Brain microvascular endothelial cell (primary cell): ENCODE measurements at regions of chr17 and their contacts with region 1.

Region 1: DNA sequence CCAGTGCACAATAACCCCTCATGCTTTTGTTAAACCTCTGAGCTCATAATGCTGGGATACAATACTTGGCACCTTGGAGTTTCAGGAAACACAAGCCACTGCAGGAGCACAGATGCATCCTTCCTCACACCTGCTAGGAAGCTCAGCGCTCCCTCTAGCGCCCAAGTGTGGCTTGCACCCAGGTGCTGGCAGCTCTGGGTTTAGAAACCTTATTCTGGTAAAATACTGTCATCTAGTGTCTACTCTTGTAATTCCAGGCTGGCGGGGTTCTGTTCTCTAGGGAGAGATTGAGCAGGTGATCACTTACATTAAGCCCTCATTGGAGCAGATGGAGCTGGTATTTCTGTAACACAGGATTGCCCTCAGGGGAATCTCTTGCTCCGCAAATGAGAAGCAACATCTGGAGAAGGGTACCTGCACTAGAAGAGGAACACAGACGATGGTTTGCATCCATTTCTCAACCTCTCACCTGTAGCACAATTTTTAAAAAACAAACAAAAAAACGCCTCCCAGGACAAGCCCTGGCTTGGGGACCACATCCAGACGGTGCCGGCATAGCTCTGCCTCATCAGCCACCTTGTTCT is 1.5 kb downstream of the CCL1 start:
- DNase-seq: peak; percentile 69
- H3K4me3 ChIP-seq: no peak overlapping the region
- H3K27ac ChIP-seq: no peak overlapping the region
- H3K27me3 ChIP-seq: no peaks in the 10 kb centered on the region
- CTCF ChIP-seq: peak; percentile 94

Region 2: DNA sequence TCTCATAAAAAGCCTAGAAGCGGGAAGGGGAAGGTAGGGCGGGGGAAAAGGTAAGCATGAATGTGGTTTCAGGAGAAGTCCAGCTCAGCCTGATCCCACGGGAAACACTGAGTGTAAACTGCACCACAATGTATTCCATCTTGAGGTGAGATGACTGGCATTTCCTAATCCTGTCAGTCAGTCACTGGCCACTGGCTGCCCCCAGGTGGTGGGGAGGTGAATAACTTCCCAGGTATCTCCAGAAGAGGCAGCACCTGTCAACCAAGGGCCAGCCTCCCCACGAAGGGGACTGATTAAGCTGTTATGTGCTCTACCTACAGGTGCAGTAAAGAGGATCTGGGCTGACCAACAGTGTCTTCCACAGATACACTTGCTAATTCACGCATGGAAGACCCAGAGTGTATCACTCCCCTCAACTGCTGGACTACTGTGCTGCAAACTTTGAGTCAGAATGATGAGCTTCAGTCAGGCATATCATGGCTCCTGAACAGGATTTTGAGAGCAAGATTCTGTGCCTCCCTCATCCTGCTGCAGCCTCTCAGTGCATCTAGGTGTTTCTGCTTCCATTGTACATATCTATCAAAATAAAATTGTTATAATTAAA is 215.0 kb before region 1 on chr17:
- in situ Hi-C with region 1: no loop called
- DNase-seq: no peak
- H3K4me3 ChIP-seq: no peak overlapping the region
- H3K27ac ChIP-seq: no peak overlapping the region
- H3K27me3 ChIP-seq: no peaks in the 10 kb centered on the region
- CTCF ChIP-seq: no peak

Region 3: DNA sequence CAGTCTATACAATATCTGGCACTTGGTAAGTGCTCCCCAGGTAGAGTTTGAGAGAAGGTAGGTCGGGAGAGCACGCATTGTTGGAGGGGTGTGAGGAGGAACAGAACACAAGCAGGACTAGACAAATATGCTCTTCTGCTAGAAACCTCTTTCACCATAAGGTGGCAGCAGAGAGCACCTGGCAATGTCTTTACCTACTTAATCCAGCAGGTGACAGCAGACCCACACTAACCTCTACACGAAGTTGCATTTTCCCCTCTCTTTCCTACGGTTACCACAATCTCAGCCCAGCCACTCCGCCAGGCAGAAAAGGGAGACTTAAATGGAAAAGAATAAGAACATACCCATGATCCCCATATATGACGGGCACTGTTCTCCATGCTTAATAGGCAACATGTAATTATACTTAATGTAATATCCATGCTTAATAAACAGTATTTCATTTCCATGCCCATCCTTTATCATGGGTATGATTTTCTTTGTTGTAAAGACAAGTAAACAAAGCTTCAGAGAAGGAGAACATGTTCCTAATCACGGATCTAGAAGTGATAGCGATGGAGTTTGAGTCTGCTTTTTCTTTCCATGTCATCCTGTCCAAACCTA is 161.5 kb before region 1 on chr17:
- in situ Hi-C with region 1: loop called (anchors 25 kb)
- DNase-seq: peak; percentile 80
- H3K4me3 ChIP-seq: no peak overlapping the region
- H3K27ac ChIP-seq: no peak overlapping the region
- H3K27me3 ChIP-seq: no peaks in the 10 kb centered on the region
- CTCF ChIP-seq: peak; percentile 100